ENCODE measurements at regions of chr7 and their contacts with region 1.

Region 1: GRCh38 chr7:152661479-152661878 is 14.5 kb downstream of the XRCC2 start:
- DNase-seq: no peak
- H3K4me3 Mint-ChIP-seq: no peak overlapping the region
- H3K27ac Mint-ChIP-seq: no peak overlapping the region
- H3K4me1 Mint-ChIP-seq: peaks cover 4% of the 10 kb centered on the region
- H3K27me3 Mint-ChIP-seq: no peaks in the 10 kb centered on the region

Region 2: GRCh38 chr7:152637920-152638565 is 23.4 kb before region 1 on chr7:
- CTCF ChIA-PET with region 1: no interaction called
- POLR2A ChIA-PET with region 1: interaction called, 15 read pairs
- DNase-seq: no peak
- H3K4me3 Mint-ChIP-seq: no peak overlapping the region
- H3K27ac Mint-ChIP-seq: no peak overlapping the region
- H3K4me1 Mint-ChIP-seq: no peaks in the 10 kb centered on the region
- H3K27me3 Mint-ChIP-seq: no peaks in the 10 kb centered on the region

Measured in activated CD4-positive, alpha-beta T cell treated with anti-CD3 and anti-CD28 coated beads, Interleukin-2, amount 10 ng/mL, durations not matched to agents 7 days and 5 days (primary cell).